ENCODE measurements at regions of chr19 and their contacts with region 1.

Region 1: DNA sequence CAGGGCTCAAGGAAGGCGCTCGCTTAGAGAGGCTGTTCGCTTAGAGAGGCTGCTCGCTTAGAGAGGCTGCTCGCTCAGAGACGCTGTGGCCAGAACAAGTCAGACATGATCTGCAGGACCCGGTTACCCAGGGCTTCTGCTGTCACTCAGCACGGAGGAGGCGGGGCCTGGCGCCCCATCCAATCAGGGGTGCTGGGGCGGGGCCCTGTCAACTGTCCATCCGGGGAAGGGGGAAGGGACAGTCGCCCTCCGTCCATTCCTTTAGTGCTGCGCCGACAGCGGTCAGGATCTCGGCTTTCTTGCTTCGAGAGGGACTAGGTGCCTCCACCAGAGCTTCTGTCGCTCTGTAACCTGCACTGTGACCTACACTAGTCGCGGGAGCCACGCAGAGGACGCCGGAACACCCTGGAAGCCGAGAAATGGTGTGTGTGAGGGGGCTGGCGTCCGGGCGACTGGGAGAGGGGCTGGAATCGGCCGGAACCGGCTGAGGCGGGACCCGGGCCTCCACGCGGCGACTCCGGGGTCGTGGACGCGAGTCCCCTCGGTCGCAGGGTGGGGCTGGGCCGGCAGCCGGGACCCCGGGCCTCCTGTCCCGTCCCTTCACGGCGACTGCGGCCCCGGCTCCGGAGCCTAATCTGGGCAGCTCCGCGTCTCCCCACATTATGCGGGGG is at the start of gene ZNF440:
- DNase-seq: peak; percentile 91 to 93
- ATAC-seq: peak; percentile 99
- H3K4me3 ChIP-seq: peak within 1 kb of the TSS; percentile 76 to 97 (median 81)
- H3K27ac ChIP-seq: peak within 1 kb of the TSS; percentile 80 to 96 (median 88)
- H3K4me1 ChIP-seq: peaks cover 7 to 10% of the 10 kb centered on the region in 2 donors
- H3K27me3 ChIP-seq: no peaks in the 10 kb centered on the region
- CTCF ChIP-seq: peak in 1 of 5 experiments; percentile 15
- POLR2A ChIP-seq: peak; percentile 71 to 89
- total RNA-seq, gene ZNF440: 2.5 to 5.5 (median 4.2) TPM

Region 2: DNA sequence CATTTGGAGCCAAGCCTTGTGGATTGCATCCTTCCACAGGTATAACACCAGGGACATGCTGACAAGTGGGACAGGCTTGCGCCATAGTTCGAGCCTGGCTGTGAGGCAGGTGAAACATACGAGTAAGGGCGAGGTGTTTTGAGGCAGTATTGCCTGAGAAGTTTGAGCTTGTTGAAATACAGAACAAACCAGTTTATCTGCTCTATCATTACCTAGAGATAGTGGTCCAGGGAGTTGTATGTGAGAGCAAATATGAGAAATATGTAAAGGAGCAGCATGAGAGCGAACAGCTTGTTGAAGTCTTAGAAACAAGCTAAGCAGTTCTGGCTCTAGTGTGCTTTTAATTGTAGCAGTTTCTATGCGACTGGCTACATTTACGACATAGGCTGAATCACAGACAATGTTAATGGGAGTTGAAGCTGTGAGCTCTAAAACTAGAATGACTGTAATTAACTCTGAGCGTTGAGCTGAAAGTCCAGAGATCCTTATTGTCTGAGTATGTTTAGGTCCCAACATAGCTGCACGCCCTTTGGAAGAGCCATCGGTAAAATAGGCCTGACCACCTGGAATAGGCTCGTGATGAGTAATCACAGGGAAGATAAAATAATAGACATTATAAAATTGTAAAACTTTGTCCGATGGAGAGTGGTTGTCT is 42.6 kb after region 1 on chr19:
- in situ Hi-C with region 1: no loop called
- intact Hi-C with region 1: no loop called
- DNase-seq: no peak
- ATAC-seq: no peak
- H3K4me3 ChIP-seq: no peak overlapping the region
- H3K27ac ChIP-seq: no peak overlapping the region
- H3K4me1 ChIP-seq: no peaks in the 10 kb centered on the region
- H3K27me3 ChIP-seq: no peaks in the 10 kb centered on the region
- CTCF ChIP-seq: no peak
- POLR2A ChIP-seq: no peak

Region 3: GRCh38 chr19:11887611-11888531 is 73.7 kb after region 1 on chr19 and contains the start of gene ZNF69:
- in situ Hi-C with region 1: no loop called
- intact Hi-C with region 1: loop called (anchors 5 kb)
- DNase-seq: peak; percentile 67 to 70
- ATAC-seq: peak; percentile 94 to 95
- H3K4me3 ChIP-seq: peak within 1 kb of the TSS; percentile 58 to 82 (median 76)
- H3K27ac ChIP-seq: peak within 1 kb of the TSS; percentile 75 to 82 (median 80)
- H3K4me1 ChIP-seq: peaks cover 8% of the 10 kb centered on the region in 2 donors
- H3K27me3 ChIP-seq: no peaks in the 10 kb centered on the region
- CTCF ChIP-seq: peak in 4 of 5 experiments; percentile 18 to 54 (median 34)
- POLR2A ChIP-seq: no peak
- total RNA-seq, gene ZNF69: 0.22 to 2.8 (median 1.8) TPM

Region 4: DNA sequence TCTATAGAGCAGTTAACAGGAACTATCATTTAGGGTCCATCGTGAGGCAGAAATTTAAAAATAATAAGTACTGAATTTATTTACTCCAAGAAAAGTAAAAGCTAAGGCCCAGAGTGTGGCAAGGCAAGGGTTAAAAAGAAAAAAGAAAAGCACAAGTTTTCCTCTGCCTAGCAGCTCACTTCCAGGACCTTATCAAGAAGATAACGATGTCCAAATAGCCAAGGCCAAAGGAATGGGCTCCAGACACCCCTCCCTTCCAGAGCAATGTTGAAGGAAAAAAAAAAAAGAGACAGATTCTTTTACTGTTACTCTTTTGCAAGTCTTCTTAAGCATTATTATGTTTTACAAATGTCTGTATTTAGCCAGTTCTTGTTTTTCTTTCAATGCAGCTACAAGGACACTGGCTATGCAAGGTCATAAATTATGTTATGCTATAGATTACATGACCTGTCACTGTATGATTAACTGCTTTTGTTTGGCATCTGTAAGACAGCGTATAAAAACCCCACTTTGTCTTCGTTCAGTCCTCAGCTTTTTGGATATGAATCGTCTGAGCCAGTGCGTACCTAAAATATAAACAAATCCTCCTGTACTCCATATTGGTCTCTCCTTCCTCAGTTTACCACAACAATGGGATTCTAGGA is 107.8 kb after region 1 on chr19:
- in situ Hi-C with region 1: no loop called
- intact Hi-C with region 1: no loop called
- DNase-seq: no peak
- ATAC-seq: no peak
- H3K4me3 ChIP-seq: no peak overlapping the region
- H3K27ac ChIP-seq: no peak overlapping the region
- H3K4me1 ChIP-seq: peaks cover 4 to 20% of the 10 kb centered on the region in 2 donors
- H3K27me3 ChIP-seq: no peaks in the 10 kb centered on the region
- CTCF ChIP-seq: no peak
- POLR2A ChIP-seq: no peak

Measured in gastrocnemius medialis (tissue), 4 donors.